Psoas muscle (tissue), 8 donors: ENCODE measurements at regions of chr14 and their contacts with region 1.

Region 1: GRCh38 chr14:52094546-52095271 is 25.9 kb upstream of the NID2 start:
- DNase-seq: no peak
- ATAC-seq: no peak
- H3K4me3 ChIP-seq: no peak overlapping the region
- H3K27ac ChIP-seq: no peak overlapping the region
- H3K4me1 ChIP-seq: no peaks in the 10 kb centered on the region
- H3K27me3 ChIP-seq: no peaks in the 10 kb centered on the region
- CTCF ChIP-seq: no peak

Region 2: GRCh38 chr14:51533160-51533559 is 561.5 kb before region 1 on chr14:
- intact Hi-C with region 1: no loop called
- DNase-seq: no peak
- ATAC-seq: no peak
- H3K4me3 ChIP-seq: no peak overlapping the region
- H3K27ac ChIP-seq: no peak overlapping the region
- H3K4me1 ChIP-seq: no peaks in the 10 kb centered on the region
- H3K27me3 ChIP-seq: no peaks in the 10 kb centered on the region
- CTCF ChIP-seq: no peak

Region 3: GRCh38 chr14:51821822-51822221 is 272.9 kb before region 1 on chr14:
- intact Hi-C with region 1: no loop called
- DNase-seq: no peak
- ATAC-seq: no peak
- H3K4me3 ChIP-seq: no peak overlapping the region
- H3K27ac ChIP-seq: no peak overlapping the region
- H3K4me1 ChIP-seq: no peaks in the 10 kb centered on the region
- H3K27me3 ChIP-seq: no peaks in the 10 kb centered on the region
- CTCF ChIP-seq: no peak

Region 4: DNA sequence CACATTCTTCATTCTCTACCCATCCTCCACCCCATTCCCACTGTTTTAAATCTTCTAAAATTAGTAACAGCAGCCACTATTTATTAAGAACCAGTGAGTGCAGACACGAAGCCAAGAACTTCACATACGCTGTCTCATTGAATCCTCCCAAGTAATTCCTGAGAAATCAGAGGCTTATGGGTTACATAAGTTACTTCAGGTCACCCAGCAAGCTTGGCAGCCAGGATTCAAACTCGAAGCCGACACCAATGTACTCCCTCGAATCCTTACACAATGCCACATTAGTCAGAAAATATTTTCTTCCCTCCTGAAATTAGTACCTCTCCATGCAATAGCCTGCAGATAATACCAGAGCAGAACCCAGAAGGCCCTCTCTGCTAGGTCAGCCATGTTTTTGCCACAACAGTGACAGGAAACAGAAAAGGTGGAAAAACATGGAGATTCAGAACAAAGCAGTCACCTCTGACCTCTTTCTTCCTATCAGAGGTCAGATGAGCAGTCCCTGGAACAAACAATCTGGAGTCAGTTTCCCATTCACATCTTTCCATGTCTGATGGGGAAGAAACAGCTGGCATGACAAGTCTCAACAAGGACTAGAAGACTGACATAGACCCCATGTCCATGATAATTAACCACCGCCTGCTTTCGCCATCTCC is 42.3 kb before region 1 on chr14:
- intact Hi-C with region 1: no loop called
- DNase-seq: no peak
- ATAC-seq: peak; percentile 25 to 82 (median 78)
- H3K4me3 ChIP-seq: no peak overlapping the region
- H3K27ac ChIP-seq: no peak overlapping the region
- H3K4me1 ChIP-seq: peaks cover 7% of the 10 kb centered on the region
- H3K27me3 ChIP-seq: no peaks in the 10 kb centered on the region
- CTCF ChIP-seq: no peak

Region 5: GRCh38 chr14:52146504-52146903 is 51.8 kb after region 1 on chr14:
- intact Hi-C with region 1: loop called in 1 of 2 experiments (anchors 1 kb)
- DNase-seq: no peak
- ATAC-seq: no peak
- H3K4me3 ChIP-seq: no peak overlapping the region
- H3K27ac ChIP-seq: no peak overlapping the region
- H3K4me1 ChIP-seq: no peaks in the 10 kb centered on the region
- H3K27me3 ChIP-seq: no peaks in the 10 kb centered on the region
- CTCF ChIP-seq: no peak

Region 6: DNA sequence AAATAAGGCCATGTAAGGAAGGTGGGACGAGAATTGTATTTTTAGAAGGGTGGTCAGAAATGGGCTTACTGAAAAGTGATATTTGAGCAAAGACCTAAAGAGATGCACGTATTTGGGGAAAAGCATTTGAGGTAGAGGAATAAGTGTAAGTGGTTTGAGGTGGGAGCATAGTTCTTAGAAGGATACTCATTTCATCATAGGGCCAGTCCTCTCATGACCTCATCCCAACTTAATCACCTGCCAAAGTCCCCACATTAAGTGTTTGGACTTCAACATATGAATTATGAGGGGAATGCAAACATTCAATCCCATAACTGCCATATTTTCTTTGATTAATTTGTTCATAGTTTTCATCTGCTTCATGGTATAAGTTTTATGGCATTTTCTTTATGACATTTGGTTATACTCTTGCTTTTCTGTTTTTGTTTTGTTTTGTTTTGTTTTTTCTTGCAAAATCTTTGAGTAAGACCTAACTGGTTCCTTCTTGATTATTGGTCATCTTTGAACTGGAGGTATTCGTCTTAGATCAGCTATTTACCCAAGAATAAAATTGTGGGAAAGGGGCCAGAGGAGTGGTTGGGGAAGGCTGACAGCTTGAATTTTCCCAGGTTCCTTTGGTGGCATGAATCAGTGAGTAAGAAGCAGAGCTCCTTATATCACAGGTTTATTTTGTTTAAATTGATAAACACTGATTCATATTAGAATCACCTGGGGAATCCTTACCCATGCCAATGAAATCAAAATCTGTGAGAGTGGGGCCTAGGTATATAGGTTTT is 672.5 kb after region 1 on chr14:
- intact Hi-C with region 1: no loop called
- DNase-seq: no peak
- ATAC-seq: no peak
- H3K4me3 ChIP-seq: no peak overlapping the region
- H3K27ac ChIP-seq: no peak overlapping the region
- H3K4me1 ChIP-seq: no peaks in the 10 kb centered on the region
- H3K27me3 ChIP-seq: no peaks in the 10 kb centered on the region
- CTCF ChIP-seq: no peak